Transverse colon (tissue), 4 donors: ENCODE measurements at regions of chr1 and their contacts with region 1.

Region 1: GRCh38 chr1:18883636-18884418 is 18.5 kb downstream of the ALDH4A1 start:
- DNase-seq: peak; percentile 73
- H3K4me3 ChIP-seq: no peak overlapping the region
- H3K27ac ChIP-seq: no peak overlapping the region
- H3K4me1 ChIP-seq: no peaks in the 10 kb centered on the region
- H3K27me3 ChIP-seq: no peaks in the 10 kb centered on the region
- CTCF ChIP-seq: peak; percentile 81 to 88 (median 83)
- EP300 ChIP-seq: no peak
- POLR2A ChIP-seq: no peak

Region 2: DNA sequence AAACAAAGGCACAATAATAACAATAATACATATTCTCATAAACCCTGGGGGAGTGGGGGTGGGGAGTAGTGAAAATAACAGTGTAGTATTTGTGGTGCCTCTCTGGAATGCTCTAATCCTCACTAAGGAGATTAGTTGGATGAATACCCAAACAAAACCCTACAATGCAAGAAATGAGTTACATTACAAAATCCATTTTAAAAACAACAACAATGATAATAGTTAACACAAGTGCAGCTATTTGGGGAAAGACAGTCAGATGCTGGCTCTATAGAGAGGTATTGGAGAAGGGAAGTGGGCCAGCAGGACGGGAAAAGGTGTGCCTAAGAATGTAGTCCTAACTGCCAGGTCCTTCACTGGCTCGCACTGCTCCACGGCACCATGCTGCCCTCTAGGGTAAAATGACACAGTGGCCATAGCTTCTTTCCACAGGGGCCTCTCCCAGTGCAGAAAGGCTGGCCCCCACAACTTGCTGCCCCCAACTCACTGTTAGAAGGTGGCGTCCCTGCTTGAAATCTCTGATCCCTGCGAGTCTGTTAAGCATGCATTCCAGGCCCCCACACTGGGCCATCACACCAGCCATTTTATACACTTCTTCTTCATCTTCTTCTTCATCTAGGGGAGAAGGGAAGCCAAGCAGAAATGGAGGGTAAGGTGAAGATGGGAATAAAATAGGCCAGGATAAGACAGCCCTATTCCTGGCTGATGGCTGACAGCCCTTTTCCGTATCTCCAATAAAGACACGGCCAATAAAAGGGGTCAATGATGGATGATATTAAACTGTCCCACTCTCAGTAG is 212.4 kb after region 1 on chr1:
- in situ Hi-C with region 1: loop called in 1 of 4 experiments (anchors 10 kb)
- intact Hi-C with region 1: loop called (anchors 10 kb)
- DNase-seq: peak; percentile 58
- H3K4me3 ChIP-seq: no peak overlapping the region
- H3K27ac ChIP-seq: no peak overlapping the region
- H3K4me1 ChIP-seq: peaks cover 0 to 12% (median 9%) of the 10 kb centered on the region in 4 donors
- H3K27me3 ChIP-seq: no peaks in the 10 kb centered on the region
- CTCF ChIP-seq: peak; percentile 39 to 65 (median 51)
- EP300 ChIP-seq: no peak
- POLR2A ChIP-seq: no peak

Region 3: DNA sequence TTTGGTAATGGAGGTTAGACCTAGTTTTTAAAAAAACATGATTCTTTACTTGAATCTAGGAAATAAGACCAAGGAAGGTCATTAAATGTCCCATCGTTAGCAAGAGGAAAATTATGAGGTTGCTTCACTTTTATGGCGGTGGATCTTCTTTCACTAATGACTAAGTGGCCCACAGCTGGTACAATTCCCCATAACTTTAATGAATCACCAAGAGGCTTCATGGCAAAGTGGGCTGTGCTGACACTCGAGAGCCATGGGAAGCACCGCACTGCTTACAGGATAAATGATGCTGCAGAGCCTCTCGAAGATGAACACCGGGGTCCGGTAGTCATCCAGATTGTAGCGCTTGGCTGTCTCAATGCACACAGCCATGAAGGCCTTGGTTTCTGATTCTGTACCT is 217.4 kb after region 1 on chr1:
- in situ Hi-C with region 1: loop called in 1 of 4 experiments (anchors 10 kb)
- intact Hi-C with region 1: loop called (anchors 10 kb)
- DNase-seq: no peak
- H3K4me3 ChIP-seq: no peak overlapping the region
- H3K27ac ChIP-seq: no peak overlapping the region
- H3K4me1 ChIP-seq: peaks cover 0 to 12% (median 9%) of the 10 kb centered on the region in 4 donors
- H3K27me3 ChIP-seq: no peaks in the 10 kb centered on the region
- CTCF ChIP-seq: no peak
- EP300 ChIP-seq: no peak
- POLR2A ChIP-seq: no peak